Dendritic cell treated with granulocyte-macrophage colony-stimulating factor and Interleukin-4, amounts not matched to agents 40 ng/mL and 50 ng/mL, for 4 days (primary cell): ENCODE measurements at regions of chr6 and their contacts with region 1.

Region 1: DNA sequence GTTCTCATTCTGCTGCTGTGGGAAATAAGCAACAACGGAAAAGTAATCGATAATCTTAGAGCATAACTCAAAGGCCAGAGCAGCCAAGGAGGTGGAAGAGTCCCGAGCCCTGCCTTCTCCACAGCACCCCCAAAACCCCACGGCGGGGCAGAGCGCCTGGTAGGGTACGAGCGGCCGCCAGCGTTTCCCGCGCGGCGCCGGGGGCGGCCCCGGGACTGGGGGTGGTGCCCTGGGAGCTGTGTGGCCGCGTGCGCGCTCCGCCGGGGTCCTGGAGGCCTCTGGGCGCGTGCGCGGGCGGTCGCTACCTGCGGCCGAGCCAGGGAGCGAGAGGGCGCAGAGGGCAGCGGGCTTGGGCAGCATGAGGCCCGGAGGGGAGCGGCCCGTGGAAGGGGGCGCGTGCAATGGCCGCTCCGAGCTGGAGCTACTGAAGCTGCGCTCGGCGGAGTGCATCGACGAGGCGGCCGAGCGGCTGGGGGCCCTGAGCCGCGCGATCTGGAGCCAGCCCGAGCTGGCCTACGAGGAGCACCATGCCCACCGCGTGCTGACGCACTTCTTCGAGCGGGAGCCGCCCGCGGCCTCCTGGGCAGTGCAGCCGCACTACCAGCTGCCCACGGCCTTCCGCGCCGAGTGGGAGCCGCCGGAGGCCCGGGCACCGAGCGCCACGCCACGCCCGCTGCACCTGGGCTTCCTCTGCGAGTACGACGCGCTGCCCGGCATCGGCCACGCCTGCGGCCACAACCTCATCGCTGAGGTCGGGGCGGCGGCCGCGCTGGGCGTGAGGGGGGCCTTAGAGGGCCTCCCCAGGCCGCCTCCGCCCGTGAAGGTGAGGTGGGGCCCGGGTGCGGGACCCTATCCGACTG is at the start of gene PM20D2:
- H3K4me3 Mint-ChIP-seq: peak within 1 kb of the TSS; percentile 78
- H3K27ac Mint-ChIP-seq: peak within 1 kb of the TSS; percentile 46
- H3K4me1 Mint-ChIP-seq: peaks cover 8% of the 10 kb centered on the region
- H3K27me3 Mint-ChIP-seq: no peaks in the 10 kb centered on the region

Region 2: DNA sequence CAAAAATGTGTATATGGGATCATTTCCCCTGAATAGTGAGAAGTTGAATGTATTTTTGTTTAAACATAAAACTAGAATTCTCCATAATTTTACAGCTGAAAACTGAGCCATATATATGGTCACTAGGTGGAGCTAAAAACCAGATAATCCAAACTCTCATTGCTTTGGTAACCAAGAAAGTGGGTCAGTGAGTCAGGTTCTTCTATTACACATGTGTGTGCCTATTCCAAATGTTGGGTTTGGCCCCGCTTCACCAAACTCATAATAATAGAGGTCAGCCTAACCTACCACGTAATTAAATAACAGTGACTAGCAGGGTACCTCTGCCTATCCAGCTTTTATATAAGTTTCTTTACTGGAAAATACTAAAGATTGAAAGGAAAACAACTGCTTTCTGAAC is 163.3 kb before region 1 on chr6:
- intact Hi-C with region 1: loop called (anchors 10 kb)
- H3K4me3 Mint-ChIP-seq: no peak overlapping the region
- H3K27ac Mint-ChIP-seq: no peak overlapping the region
- H3K4me1 Mint-ChIP-seq: peaks cover 9% of the 10 kb centered on the region
- H3K27me3 Mint-ChIP-seq: no peaks in the 10 kb centered on the region